Activated T-helper 2 cell treated with anti-CD3 and anti-CD28 coated beads, Interferon-gamma antibody, Interleukin-2, Interleukin-4, amounts not matched to agents 10 μg/mL and 5 μg/mL and 100 μg/mL, durations not matched to agents 14 hours and 24 hours and 36 hours (primary cell): ENCODE measurements at regions of chr1 and their contacts with region 1.

Region 1: GRCh38 chr1:221994274-221994698 is 252.4 kb upstream of the DUSP10 start:
- DNase-seq: peak; percentile 8
- H3K4me3 Mint-ChIP-seq: no peak overlapping the region
- H3K27ac Mint-ChIP-seq: peak overlapping the region; percentile 96
- H3K4me1 Mint-ChIP-seq: peaks cover 45% of the 10 kb centered on the region
- H3K27me3 Mint-ChIP-seq: no peaks in the 10 kb centered on the region

Region 2: GRCh38 chr1:221911714-221912113 is 82.6 kb before region 1 on chr1:
- intact Hi-C with region 1: loop called (anchors 5 kb)
- DNase-seq: no peak
- H3K4me3 Mint-ChIP-seq: no peak overlapping the region
- H3K27ac Mint-ChIP-seq: no peak overlapping the region
- H3K4me1 Mint-ChIP-seq: peaks cover 15% of the 10 kb centered on the region
- H3K27me3 Mint-ChIP-seq: peaks cover 6% of the 10 kb centered on the region

Region 3: DNA sequence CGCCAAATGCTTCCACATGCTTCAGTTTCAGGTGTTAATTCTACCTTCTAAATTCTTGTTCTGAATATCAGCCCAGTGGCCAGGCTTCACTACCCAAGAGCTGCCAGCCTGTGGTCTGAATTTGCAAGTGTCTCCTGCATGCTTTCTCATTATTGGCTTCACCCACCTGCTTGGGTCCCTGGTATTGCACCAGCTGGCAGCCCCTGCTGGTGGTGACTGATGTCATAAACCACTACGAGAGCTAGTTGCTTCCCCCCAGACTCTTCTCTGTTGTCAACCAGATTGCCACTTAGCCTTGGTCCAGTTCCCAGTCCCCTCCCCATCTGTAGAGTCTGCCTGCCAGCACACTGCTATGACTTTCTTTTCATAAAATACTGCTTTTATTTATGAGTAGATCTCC is 54.7 kb before region 1 on chr1:
- intact Hi-C with region 1: no loop called
- DNase-seq: no peak
- H3K4me3 Mint-ChIP-seq: no peak overlapping the region
- H3K27ac Mint-ChIP-seq: no peak overlapping the region
- H3K4me1 Mint-ChIP-seq: no peaks in the 10 kb centered on the region
- H3K27me3 Mint-ChIP-seq: peaks cover 7% of the 10 kb centered on the region

Region 4: DNA sequence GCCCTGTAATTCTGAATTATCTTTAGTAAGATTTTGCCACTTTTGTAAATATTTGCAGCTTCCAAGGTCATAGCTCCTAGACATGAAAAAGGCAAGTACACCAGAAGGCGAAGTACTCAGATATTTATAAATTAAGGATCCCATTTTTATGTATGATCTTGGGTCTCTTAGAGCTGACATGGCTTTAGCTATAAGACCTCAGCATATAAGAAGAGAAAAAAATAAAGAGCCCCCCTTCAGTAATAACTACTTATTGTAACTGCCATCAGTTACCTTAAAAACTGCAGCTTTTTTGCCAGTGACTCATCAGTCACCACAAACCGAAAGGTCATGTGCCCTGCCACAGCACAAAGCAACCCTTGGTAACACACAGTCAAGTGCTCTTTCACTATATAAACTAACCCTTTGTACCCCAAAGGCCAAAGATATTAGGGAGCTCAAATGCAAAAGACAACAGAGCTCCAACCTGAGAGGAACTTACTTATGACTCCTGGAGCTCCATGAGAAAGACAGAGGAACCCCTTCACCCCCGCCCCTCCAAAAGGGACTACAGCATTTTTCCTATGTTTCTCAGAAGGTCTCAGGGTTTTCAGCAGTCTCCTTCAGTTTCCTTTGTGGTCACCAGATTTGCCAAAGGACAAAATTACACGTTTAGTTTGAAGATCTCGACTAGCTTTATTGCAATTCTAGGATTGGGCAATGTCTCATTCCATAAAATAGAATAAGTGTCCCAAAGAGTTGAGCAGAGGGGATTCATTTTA is 32.6 kb before region 1 on chr1:
- intact Hi-C with region 1: loop called (anchors 2 kb)
- DNase-seq: peak; percentile 37
- H3K4me3 Mint-ChIP-seq: no peak overlapping the region
- H3K27ac Mint-ChIP-seq: peak overlapping the region; percentile 4
- H3K4me1 Mint-ChIP-seq: peaks cover 21% of the 10 kb centered on the region
- H3K27me3 Mint-ChIP-seq: no peaks in the 10 kb centered on the region